Right ventricle myocardium inferior (tissue), 1 donor: ENCODE measurements at regions of chrX and their contacts with region 1.

Region 1: DNA sequence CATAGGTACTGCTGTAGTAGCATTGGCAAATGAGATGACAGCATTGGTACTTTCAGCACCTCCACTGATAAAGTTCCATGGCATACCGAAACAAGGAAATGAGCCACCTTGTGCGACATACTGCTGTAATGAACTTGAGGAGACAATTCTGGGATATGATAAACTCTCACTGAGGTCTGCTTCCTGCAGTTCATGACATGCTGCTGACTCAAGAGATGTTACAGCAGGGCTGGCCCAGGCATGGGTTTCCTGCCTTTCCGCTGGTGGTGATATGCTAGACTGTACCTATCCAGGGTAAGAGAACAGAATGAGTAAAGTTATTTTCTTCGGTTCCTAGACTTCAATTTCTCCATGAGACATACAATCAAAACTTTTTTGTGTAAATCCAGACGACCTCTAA is 17.1 kb downstream of the BEND2 start:
- DNase-seq: no peak
- ATAC-seq: no peak

Region 2: DNA sequence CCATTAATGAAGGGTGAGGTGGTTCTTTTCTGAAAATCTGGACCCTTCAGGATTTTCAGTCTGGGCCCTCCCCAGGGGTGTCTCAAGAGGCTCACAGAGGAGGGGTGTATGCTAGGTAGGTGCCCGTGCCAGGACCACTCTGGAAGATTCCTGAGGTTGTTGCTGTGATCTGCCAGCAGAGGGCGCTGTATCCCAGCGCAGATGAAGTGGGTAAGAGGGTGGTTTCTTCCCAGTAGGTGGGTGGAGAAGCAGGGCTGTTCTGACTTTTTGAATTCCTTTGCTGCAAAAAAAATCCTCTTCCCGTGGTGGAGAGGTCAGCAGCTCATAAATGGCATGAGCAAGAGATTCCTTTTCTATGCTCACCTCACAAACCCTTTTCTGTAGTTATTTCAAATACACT is 415.2 kb before region 1 on chrX:
- intact Hi-C with region 1: loop called (anchors 10 kb)
- DNase-seq: no peak
- ATAC-seq: peak; percentile 42

Region 3: DNA sequence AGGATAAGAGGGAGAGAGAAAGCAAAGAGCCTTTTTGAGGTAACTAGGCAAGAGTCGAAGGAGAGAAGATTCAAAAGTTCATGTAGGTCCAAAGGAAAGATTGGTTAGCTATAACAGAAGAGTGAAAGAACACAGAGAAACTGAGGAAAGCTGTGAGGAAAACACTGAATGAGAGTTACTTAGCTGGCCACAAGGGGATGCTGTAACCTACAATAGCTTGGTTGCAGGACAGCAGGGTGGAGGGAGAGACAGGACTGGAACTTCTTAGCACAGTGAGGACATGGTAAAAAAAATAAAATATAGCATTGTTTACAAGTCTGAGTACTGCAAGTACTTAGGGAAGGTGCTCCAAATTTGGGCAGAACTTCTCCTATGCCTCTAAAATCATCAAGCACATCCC is 390.9 kb before region 1 on chrX:
- intact Hi-C with region 1: loop called (anchors 10 kb)
- DNase-seq: no peak
- ATAC-seq: no peak

Region 4: GRCh38 chrX:17944833-17945497 is 258.7 kb before region 1 on chrX:
- intact Hi-C with region 1: loop called (anchors 10 kb)
- DNase-seq: no peak
- ATAC-seq: no peak

Region 5: GRCh38 chrX:18017416-18017815 is 186.2 kb before region 1 on chrX:
- intact Hi-C with region 1: no loop called
- DNase-seq: no peak
- ATAC-seq: no peak